Activated B cell treated with CpG ODN at 0.5 μM for 24 hours (primary cell): ENCODE measurements at regions of chr2 and their contacts with region 1.

Region 1: DNA sequence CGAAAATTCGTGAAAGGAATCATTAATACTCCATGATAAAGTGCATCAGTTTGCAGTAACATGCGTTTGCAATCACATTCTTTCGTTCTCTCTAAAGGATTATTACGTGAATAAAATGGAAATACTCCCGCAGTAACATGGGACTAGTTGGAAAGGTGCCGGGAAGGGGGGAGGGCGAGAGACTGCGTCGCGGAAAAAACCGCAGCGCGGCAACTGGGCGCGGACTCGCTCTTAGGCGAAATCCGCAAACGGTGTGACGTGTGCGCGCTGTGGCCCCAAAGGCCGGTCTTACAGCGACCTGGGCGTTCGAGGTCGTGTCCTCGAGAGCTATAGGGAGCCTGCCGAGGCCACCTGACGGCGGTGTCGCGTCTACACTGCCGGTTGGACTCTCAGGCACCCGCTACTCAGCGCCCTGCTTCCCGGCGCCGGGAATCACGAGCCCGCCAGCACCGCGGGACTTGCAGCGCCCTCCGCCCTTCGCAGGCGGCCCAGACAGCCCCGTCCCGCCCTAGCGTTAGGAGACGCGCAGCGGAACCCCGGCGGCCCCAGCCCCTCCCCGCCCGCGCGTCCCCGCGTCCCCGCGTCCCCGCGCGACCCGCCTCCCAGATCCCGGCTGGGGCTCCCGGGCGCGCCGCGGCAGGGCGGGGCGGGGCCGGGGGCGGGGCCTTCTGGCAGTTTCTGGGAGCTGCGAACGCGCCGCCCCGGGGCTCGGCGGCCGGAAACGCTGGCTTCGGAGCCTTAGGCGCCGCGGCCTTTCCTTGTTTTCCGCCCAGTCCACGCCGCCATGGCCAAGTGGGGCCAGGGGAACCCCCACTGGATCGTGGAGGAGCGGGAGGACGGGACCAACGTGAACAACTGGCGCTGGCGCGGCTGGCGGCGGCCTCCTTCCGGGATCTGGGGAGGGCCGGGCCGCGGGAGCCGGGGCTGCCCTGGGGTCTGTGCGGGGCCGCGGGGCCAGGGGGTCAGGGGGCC is 15.1 kb downstream of the C2orf74 start:
- DNase-seq: peak; percentile 95
- ATAC-seq: peak; percentile 90
- H3K4me3 Mint-ChIP-seq: peak overlapping the region; percentile 94
- H3K27ac Mint-ChIP-seq: peak overlapping the region; percentile 94
- H3K4me1 Mint-ChIP-seq: peaks cover 48% of the 10 kb centered on the region
- H3K27me3 Mint-ChIP-seq: no peaks in the 10 kb centered on the region
- CTCF ChIP-seq: no peak

Region 2: DNA sequence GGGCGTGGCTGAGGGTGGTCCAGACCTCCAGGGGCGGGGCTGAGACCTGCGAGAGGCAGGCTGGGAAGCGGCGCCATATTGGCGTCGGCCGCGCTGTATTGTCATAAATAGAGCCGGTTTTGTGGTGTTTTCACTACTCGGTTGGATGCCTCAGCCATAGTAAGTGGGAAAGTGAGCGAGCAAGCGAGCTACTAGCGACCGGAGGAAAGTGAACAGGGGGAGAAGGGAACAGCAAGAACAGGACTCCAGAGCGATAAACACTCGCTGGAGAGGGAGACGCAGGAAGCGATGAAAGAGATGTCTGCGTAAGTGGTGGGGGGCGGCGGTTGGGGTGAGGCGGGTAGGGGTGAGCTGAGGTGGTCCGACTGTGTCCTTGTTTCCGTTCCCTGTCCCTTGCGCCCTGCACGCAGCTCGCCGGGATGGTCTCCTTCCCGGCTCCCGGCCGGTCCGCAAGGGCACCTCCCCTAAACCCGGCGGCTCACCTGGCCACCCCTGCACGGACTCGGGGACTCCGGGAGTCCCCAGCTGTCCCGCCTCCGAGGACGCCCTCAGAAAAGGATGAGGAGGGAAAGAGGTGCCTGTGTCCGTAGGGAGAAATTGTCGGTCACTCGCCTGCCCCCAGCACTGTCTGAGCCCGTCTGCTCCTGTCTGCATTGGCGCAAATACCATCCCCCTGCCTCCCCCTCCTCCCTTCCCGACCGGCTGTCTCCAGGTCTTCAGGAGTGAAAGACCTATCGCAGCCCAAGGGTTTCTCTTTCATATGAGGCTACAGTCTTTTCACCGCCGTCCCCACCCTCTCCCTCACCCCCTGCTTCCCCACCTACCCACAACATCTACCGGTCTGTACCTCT is 420.6 kb before region 1 on chr2 and contains the start of gene PAPOLG:
- CTCF ChIA-PET with region 1: no interaction called
- POLR2A ChIA-PET with region 1: interaction called, 6 read pairs
- intact Hi-C with region 1: loop called (anchors 2 kb)
- DNase-seq: peak; percentile 96
- ATAC-seq: peak; percentile 100
- H3K4me3 Mint-ChIP-seq: peak within 1 kb of the TSS; percentile 100
- H3K27ac Mint-ChIP-seq: peak within 1 kb of the TSS; percentile 99
- H3K4me1 Mint-ChIP-seq: peaks cover 29% of the 10 kb centered on the region
- H3K27me3 Mint-ChIP-seq: no peaks in the 10 kb centered on the region
- CTCF ChIP-seq: no peak
- total RNA-seq, gene PAPOLG: 20.3 and 20.5 TPM in 2 replicates

Region 3: DNA sequence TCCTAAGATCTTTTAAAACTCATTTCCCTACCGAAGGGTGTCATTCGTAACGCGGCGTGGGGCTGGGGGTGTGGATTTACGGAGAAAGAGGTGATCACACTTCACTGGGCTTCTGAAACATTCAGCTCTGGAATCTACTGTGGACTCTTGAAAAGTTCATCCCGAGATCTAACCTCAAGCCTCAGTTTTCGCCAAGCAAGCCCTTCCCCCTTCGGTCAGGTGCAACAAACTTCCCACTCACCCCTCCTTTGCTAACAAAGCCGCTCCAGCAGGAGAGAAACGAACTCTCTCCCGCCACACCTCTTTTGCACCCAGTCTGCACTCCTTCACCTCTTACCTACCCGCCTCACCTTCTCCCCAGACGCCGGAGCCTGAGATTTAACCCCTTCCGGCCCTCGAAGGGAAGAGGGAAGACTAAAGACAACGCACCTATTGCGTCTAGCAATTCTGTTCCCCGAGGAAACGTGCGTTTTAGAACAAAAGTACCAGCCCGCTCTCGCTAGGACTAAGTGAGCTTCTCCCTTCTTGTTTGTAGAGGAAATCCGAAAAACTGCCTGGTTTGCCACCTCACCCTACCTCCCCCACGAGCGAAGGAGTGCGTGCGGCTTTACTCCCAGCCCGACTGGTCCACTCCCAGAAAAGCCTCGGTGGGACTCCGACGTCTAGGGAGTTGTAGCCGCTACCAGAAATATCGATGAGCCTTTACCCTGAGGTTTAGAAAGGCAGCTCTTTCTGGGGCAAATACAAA is 160.1 kb before region 1 on chr2:
- CTCF ChIA-PET with region 1: no interaction called
- POLR2A ChIA-PET with region 1: interaction called, 12 read pairs
- intact Hi-C with region 1: loop called (anchors 1 kb)
- DNase-seq: peak; percentile 62
- ATAC-seq: peak; percentile 70
- H3K4me3 Mint-ChIP-seq: peak overlapping the region; percentile 99
- H3K27ac Mint-ChIP-seq: peak overlapping the region; percentile 98
- H3K4me1 Mint-ChIP-seq: peaks cover 33% of the 10 kb centered on the region
- H3K27me3 Mint-ChIP-seq: no peaks in the 10 kb centered on the region
- CTCF ChIP-seq: no peak

Region 4: DNA sequence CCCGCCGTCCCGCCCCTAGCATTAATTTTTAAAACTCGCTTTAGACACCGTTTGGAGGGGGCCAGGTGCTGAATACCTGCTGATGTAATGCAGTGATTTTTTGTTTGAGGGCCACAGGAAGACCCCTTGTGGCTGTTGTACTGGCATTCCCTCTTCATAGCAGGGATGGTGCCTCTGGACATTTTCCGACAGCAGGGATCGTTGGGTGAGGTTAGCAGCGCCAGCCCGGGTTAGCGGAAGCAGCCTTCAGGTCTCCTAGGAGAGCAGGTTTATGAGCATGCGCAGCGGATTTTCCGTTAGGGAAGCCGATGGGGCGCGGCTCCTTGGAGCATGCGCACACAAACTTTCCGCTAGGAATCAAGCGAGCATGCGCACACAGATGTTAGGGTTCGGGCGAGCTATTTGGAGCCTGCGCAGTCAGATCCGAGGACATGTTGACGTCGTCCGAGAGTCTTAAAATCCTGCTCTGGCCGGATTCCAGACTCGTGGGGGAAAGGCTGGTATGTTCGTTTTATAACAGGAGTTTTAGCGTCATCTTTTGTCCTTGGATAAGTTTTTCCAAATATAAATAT is 32.3 kb before region 1 on chr2:
- CTCF ChIA-PET with region 1: no interaction called
- POLR2A ChIA-PET with region 1: interaction called, 29 read pairs
- intact Hi-C with region 1: loop called (anchors 1 kb)
- DNase-seq: peak; percentile 82
- ATAC-seq: peak; percentile 93
- H3K4me3 Mint-ChIP-seq: peak overlapping the region; percentile 97
- H3K27ac Mint-ChIP-seq: peak overlapping the region; percentile 97
- H3K4me1 Mint-ChIP-seq: peaks cover 9% of the 10 kb centered on the region
- H3K27me3 Mint-ChIP-seq: no peaks in the 10 kb centered on the region
- CTCF ChIP-seq: no peak

Region 5: DNA sequence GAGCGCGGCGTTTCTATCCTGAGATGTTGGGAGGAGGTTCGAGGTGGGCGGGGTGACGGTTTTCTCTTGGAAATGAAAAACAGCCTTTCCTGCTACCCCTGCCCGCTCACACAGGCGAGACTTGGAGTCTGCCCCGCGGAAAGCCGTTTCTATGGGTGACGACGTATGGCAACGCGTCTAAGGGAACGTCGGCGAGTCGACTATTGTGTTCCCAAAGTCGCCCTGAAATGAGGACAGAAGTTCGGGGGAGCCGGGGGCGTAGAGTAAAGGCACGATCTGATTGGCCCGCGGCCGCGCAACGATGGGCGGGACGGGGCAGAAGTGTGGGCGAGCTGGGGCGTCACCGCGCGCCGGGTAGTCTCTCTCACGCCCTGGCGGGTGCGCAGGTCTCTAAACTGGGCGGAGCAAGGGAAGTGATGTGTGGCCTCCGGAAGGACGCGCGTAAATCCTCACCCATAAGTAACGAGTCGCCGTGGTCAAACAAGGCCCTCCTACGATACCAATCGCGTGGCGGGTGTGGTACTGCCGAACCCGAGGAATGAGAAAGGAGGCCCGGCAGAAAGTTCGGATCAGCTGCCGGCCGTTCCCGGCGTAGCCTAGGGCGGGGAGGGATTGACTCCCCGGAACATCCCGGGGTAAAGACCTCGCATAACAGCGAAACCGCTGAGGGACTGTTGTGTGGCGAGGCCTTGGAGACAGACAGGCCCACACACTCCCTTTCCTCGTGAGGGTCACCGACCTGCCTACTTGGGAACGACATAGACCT is 587.2 kb after region 1 on chr2:
- CTCF ChIA-PET with region 1: no interaction called
- POLR2A ChIA-PET with region 1: no interaction called
- intact Hi-C with region 1: loop called (anchors 1 kb)
- DNase-seq: peak; percentile 88
- ATAC-seq: peak; percentile 98
- H3K4me3 Mint-ChIP-seq: peak overlapping the region; percentile 95
- H3K27ac Mint-ChIP-seq: peak overlapping the region; percentile 94
- H3K4me1 Mint-ChIP-seq: peaks cover 16% of the 10 kb centered on the region
- H3K27me3 Mint-ChIP-seq: no peaks in the 10 kb centered on the region
- CTCF ChIP-seq: no peak